GM13976 (cell line): ENCODE measurements at regions of chr11 and their contacts with region 1.

Region 1: DNA sequence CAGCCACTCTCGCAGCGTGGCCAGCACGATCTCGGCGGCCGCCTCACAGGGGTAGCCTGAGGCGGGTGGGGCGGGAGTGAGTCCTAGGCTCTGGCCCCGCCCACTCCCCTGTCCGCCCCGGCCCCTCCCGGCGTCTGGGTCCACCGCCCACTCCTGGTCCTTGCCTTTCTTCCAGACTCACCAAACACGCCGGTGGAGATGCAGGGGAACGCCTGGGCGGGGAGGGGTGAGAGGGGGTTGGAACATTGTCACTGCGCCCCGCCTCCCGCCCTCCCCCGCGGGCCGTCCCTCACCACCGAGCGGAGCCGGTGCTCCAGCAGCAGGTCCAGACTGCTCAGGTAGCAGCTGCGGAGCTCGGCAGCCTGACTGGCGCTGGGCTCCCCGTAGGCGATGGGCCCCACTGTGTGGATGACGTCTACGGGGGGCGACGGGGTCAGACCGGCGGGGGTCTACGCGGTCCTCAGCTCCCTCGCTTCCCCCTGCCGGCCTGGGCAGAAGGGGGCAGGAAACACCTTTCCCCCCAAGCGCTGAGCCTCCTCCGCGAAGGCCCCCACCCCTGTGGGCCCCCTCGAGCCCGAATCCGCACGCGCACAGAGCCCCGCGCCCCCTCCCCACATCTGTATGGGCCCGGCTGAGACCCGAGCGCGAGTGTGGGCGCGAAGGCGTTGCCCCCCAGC is 13.2 kb downstream of the OTUB1 start:
- DNase-seq: peak; percentile 84
- CTCF ChIP-seq: no peak

Region 2: DNA sequence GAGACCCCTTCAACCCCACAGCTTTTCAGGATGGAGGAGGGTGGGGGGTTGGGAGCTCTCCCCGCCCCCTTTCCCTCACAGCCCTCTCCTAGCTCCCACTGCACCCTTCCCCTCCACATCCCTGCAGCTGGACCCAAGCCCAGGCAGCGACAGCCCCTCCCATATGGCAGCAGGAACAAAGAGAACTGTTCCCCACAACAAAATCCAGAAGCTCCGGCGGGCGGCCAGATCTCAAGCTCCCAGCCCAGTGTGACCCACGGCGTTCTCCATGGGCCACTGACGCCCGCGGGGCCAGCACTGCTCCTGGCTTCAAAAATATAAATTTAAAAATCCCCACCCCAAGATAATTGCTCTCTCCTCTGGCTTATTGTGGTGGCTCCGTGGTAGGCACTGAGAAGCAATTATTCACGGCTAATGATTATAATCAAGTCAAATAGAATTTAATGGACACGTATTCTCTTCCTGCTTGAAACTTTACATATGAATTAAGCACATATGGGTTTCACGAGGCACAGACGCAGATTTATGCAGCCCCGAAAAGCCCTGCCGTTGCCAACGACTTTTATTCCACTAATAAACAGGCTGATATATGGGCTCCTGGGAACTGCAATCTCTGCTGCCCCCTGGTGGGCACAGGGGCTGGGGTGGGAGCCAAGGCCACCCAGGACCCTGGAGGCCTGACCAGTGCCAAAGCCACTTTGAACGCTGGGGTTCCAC is 148.9 kb after region 1 on chr11:
- in situ Hi-C with region 1: loop called (anchors 10 kb)
- DNase-seq: peak; percentile 86
- CTCF ChIP-seq: peak; percentile 84